ENCODE measurements at regions of chrX and their contacts with region 1.

Region 1: GRCh38 chrX:11381464-11381863 is 88.3 kb downstream of the AMELX start:
- DNase-seq: peak; percentile 30
- ATAC-seq: peak; percentile 97
- H3K4me3 ChIP-seq: no peak overlapping the region
- H3K27ac ChIP-seq: no peak overlapping the region
- H3K4me1 ChIP-seq: no peaks in the 10 kb centered on the region
- H3K27me3 ChIP-seq: no peaks in the 10 kb centered on the region
- CTCF ChIP-seq: peak; percentile 64 to 71 (median 70)
- EP300 ChIP-seq: no peak
- POLR2A ChIP-seq: no peak
- RAD21 ChIP-seq: peak; percentile 60

Region 2: DNA sequence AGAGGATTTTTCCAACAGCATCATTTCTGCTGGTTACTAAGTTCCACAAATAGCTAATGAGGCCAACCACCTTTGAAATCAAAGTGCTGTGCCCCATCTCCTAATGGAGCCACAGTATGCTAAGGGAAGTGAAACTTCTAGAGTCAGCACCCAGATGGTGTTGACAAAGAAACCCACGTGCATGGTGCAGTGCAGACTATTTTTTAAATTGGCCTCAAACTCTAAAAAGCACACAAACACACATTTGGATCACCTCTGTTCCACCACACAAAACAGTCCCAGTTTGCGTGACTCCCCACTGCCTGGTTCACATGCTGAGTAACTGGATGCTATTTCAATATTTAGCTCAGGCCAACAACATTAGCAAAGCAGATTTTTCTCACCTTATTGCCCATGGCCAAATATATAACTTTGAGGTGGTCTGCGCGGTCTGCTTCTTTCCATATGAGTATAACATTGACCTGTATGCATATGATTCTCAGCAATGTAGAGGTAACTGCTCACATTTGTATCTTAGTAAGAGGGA is 18.3 kb before region 1 on chrX:
- CTCF ChIA-PET with region 1: interaction called, 8 read pairs
- POLR2A ChIA-PET with region 1: no interaction called
- RAD21 ChIA-PET with region 1: interaction called, 7 read pairs
- SMC1A ChIA-PET with region 1: interaction called, 10 read pairs
- in situ Hi-C with region 1: no loop called
- intact Hi-C with region 1: no loop called
- DNase-seq: peak; percentile 67
- ATAC-seq: peak; percentile 99
- H3K4me3 ChIP-seq: no peak overlapping the region
- H3K27ac ChIP-seq: peak overlapping the region; percentile 22; the same call in 1 of the 2 replicates
- H3K4me1 ChIP-seq: no peaks in the 10 kb centered on the region
- H3K27me3 ChIP-seq: no peaks in the 10 kb centered on the region
- CTCF ChIP-seq: no peak; a peak in 1 of 6 replicates
- EP300 ChIP-seq: peak; percentile 79 to 91
- POLR2A ChIP-seq: no peak
- RAD21 ChIP-seq: no peak

Region 3: GRCh38 chrX:11398785-11399184 is 17.3 kb after region 1 on chrX:
- CTCF ChIA-PET with region 1: interaction called, 10 read pairs
- POLR2A ChIA-PET with region 1: no interaction called
- RAD21 ChIA-PET with region 1: interaction called, 7 read pairs
- SMC1A ChIA-PET with region 1: interaction called, 6 read pairs
- in situ Hi-C with region 1: no loop called
- intact Hi-C with region 1: no loop called
- DNase-seq: no peak
- ATAC-seq: no peak
- H3K4me3 ChIP-seq: no peak overlapping the region
- H3K27ac ChIP-seq: no peak overlapping the region
- H3K4me1 ChIP-seq: no peaks in the 10 kb centered on the region
- H3K27me3 ChIP-seq: no peaks in the 10 kb centered on the region
- CTCF ChIP-seq: no peak
- EP300 ChIP-seq: no peak
- POLR2A ChIP-seq: no peak
- RAD21 ChIP-seq: no peak

Region 4: DNA sequence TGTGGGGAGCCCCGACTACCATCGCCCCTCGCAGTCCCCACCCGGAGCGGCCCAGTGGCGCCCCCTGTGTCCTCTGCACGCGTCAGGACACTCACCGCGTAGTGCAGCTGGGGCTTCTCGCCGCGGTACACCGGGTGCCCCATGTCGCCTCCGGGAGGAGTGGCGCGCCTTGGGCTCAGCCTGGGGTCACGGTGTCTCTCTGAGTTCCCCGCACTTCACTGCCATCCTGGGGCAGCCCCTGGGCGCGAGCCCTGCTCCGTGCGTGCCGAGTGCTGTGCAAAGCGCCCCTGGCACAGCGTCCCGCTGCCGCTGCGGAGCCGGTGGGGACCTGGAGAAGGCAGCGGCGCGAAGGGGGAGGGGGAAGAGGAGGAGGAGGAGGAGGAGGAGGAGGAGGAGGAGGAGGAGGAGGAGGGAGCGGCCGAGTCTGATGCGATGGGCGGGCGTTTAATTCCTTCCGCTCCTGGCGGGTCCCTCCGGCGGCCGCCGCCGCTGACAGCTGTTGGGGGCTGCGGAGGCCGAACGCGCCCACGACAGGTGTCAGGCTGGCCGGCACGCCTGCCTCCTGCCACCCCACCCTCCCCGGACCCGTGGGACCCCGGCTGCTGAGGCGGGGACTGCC is 46.1 kb after region 1 on chrX:
- CTCF ChIA-PET with region 1: interaction called, 5 read pairs
- POLR2A ChIA-PET with region 1: no interaction called
- RAD21 ChIA-PET with region 1: no interaction called
- SMC1A ChIA-PET with region 1: interaction called, 5 read pairs
- in situ Hi-C with region 1: no loop called
- intact Hi-C with region 1: loop called (anchors 5 kb)
- DNase-seq: no peak
- ATAC-seq: peak; percentile 54
- H3K4me3 ChIP-seq: no peak overlapping the region; the same call in 1 of the 2 replicates
- H3K27ac ChIP-seq: no peak overlapping the region
- H3K4me1 ChIP-seq: no peaks in the 10 kb centered on the region; the same call in 1 of the 2 replicates
- H3K27me3 ChIP-seq: no peaks in the 10 kb centered on the region
- CTCF ChIP-seq: 0 out of 6 replicates have a peak, but pooled peaks of 2 of the 3 experiments have one; percentile 14 to 21
- EP300 ChIP-seq: no peak
- POLR2A ChIP-seq: no peak
- RAD21 ChIP-seq: 0 out of 2 replicates have a peak, but pooled peaks have one; percentile 13

Region 5: GRCh38 chrX:11836284-11836683 is 454.8 kb after region 1 on chrX:
- CTCF ChIA-PET with region 1: no interaction called
- POLR2A ChIA-PET with region 1: no interaction called
- RAD21 ChIA-PET with region 1: no interaction called
- SMC1A ChIA-PET with region 1: no interaction called
- in situ Hi-C with region 1: no loop called
- intact Hi-C with region 1: no loop called
- DNase-seq: no peak
- ATAC-seq: peak; percentile 56
- H3K4me3 ChIP-seq: no peak overlapping the region
- H3K27ac ChIP-seq: no peak overlapping the region
- H3K4me1 ChIP-seq: no peaks in the 10 kb centered on the region
- H3K27me3 ChIP-seq: peaks cover 0 to 2% of the 10 kb centered on the region in 2 experiments; a peak in 1 of 4 replicates
- CTCF ChIP-seq: no peak
- EP300 ChIP-seq: no peak
- POLR2A ChIP-seq: no peak
- RAD21 ChIP-seq: no peak

Region 6: DNA sequence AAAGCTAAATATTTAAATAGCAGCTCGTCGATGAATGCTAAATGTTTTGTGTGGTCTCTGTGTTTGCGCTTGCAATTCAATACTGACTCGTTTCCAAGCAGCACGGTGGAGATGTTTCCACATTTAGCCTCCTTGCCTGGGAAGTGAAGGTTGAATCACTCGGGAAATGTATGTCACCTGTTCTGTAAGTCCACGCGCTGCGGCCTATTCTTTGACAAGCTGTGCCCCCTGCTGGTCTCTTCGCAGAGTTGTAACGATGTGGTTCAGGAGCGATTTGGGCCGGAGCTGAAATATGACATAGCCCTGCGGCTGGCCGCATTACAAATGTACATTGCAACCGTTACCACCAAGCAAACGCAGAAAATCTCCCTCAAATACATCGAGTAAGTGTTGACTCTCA is 1320.2 kb after region 1 on chrX:
- CTCF ChIA-PET with region 1: interaction called, 4 read pairs
- POLR2A ChIA-PET with region 1: no interaction called
- RAD21 ChIA-PET with region 1: interaction called, 5 read pairs
- SMC1A ChIA-PET with region 1: interaction called, 3 read pairs
- in situ Hi-C with region 1: no loop called
- intact Hi-C with region 1: loop called (anchors 5 kb)
- DNase-seq: peak; percentile 12
- ATAC-seq: peak; percentile 98
- H3K4me3 ChIP-seq: no peak overlapping the region
- H3K27ac ChIP-seq: no peak overlapping the region
- H3K4me1 ChIP-seq: no peaks in the 10 kb centered on the region
- H3K27me3 ChIP-seq: no peaks in the 10 kb centered on the region
- CTCF ChIP-seq: peak; percentile 70 to 84 (median 71)
- EP300 ChIP-seq: no peak
- POLR2A ChIP-seq: no peak
- RAD21 ChIP-seq: peak; percentile 86

Measured in GM12878 (cell line).